H1 (cell line): ENCODE measurements at regions of chr1 and their contacts with region 1.

Region 1: GRCh38 chr1:162696286-162696862 is 64.1 kb downstream of the DDR2 start:
- DNase-seq: peak; percentile 47 to 67
- H3K4me3 ChIP-seq: peak overlapping the region in 2 of 4 experiments; percentile 4 to 39; a peak in 3 of 8 replicates
- H3K27ac ChIP-seq: peak overlapping the region; percentile 68; the same call in 1 of the 2 replicates
- H3K4me1 ChIP-seq: peaks cover 1 to 13% (median 8%) of the 10 kb centered on the region in 4 experiments; a peak in 6 of 7 replicates
- H3K27me3 ChIP-seq: no peaks in the 10 kb centered on the region
- CTCF ChIP-seq: no peak
- EP300 ChIP-seq: no peak
- POLR2A ChIP-seq: peak in 1 of 2 experiments; percentile 47; a peak in 1 of 3 replicates
- RAD21 ChIP-seq: no peak; a peak in 1 of 4 replicates

Region 2: GRCh38 chr1:162538815-162539431 is 157.5 kb before region 1 on chr1:
- CTCF ChIA-PET with region 1: no interaction called
- POLR2A ChIA-PET with region 1: no interaction called
- DNase-seq: no peak
- H3K4me3 ChIP-seq: no peak overlapping the region
- H3K27ac ChIP-seq: no peak overlapping the region
- H3K4me1 ChIP-seq: no peaks in the 10 kb centered on the region
- H3K27me3 ChIP-seq: no peaks in the 10 kb centered on the region
- CTCF ChIP-seq: no peak
- EP300 ChIP-seq: no peak
- POLR2A ChIP-seq: no peak
- RAD21 ChIP-seq: no peak

Region 3: DNA sequence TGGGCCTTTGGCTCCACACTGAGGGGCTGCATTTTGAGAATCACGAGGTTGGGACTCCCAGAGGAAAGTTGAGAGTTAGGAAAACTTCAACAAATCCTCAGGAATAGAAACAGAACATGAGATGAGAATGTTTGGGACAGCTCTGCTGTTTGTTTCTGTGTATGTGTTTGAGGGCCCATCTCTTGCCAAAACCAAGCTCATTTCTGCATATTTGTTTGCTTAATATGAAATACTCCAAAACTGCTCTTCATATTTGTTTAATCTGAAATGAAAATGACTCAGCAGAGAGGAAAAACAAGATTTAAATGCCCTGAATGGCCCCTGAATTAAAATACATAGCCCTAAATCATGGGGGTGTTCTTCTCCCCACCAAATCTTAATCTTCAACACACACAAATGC is 14.0 kb after region 1 on chr1:
- CTCF ChIA-PET with region 1: interaction called, 13 read pairs
- POLR2A ChIA-PET with region 1: no interaction called
- DNase-seq: no peak
- H3K4me3 ChIP-seq: no peak overlapping the region
- H3K27ac ChIP-seq: no peak overlapping the region
- H3K4me1 ChIP-seq: no peaks in the 10 kb centered on the region
- H3K27me3 ChIP-seq: no peaks in the 10 kb centered on the region
- CTCF ChIP-seq: no peak
- EP300 ChIP-seq: no peak
- POLR2A ChIP-seq: no peak
- RAD21 ChIP-seq: no peak